MCF 10A (cell line): ENCODE measurements at regions of chr17 and their contacts with region 1.

Region 1: GRCh38 chr17:76940738-76941350 is 72.6 kb downstream of the MGAT5B start:
- DNase-seq: peak; percentile 6
- H3K4me3 Mint-ChIP-seq: no peak overlapping the region
- H3K27ac Mint-ChIP-seq: no peak overlapping the region
- H3K4me1 Mint-ChIP-seq: no peaks in the 10 kb centered on the region
- H3K27me3 Mint-ChIP-seq: no peaks in the 10 kb centered on the region
- CTCF ChIP-seq: no peak

Region 2: DNA sequence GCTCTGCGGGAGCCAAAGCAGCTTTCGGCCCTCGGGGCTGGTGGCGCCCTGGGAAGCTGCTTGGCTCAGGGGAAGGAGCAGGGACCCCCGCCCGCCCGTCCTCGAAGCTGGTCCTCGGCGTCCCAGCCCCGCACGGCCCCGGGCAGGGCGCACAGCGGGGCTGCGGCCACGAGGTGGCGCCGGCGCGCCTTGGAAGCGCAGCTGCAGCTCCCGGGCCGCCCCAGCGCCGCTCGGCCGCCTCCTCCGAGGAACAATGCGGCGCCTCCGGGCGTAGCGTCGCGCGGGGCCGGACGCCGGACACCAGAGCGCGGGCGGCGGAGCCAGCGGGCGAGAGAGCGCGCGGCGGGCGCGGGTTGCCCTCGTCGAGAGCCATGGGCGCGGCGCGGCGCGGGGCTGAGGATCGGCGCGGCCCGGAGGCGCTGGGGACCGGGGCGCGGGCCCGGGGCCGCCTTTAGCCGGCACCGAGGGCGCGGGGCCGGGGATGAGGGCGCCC is 72.6 kb before region 1 on chr17 and contains the start of gene MGAT5B:
- CTCF ChIA-PET with region 1: no interaction called
- POLR2A ChIA-PET with region 1: no interaction called
- intact Hi-C with region 1: loop called (anchors 10 kb)
- DNase-seq: peak; percentile 71
- H3K4me3 Mint-ChIP-seq: peak within 1 kb of the TSS; percentile 58
- H3K27ac Mint-ChIP-seq: no peak within 1 kb of the TSS
- H3K4me1 Mint-ChIP-seq: peaks cover 25% of the 10 kb centered on the region
- H3K27me3 Mint-ChIP-seq: no peaks in the 10 kb centered on the region
- CTCF ChIP-seq: peak; percentile 84
- total RNA-seq, gene MGAT5B: 1.3 and 1.7 TPM in 2 replicates

Region 3: GRCh38 chr17:76924345-76925342 is 16.2 kb before region 1 on chr17:
- CTCF ChIA-PET with region 1: no interaction called
- POLR2A ChIA-PET with region 1: no interaction called
- intact Hi-C with region 1: no loop called
- DNase-seq: no peak
- H3K4me3 Mint-ChIP-seq: no peak overlapping the region
- H3K27ac Mint-ChIP-seq: no peak overlapping the region
- H3K4me1 Mint-ChIP-seq: no peaks in the 10 kb centered on the region
- H3K27me3 Mint-ChIP-seq: peaks cover 13% of the 10 kb centered on the region
- CTCF ChIP-seq: no peak

Region 4: GRCh38 chr17:76997981-76998531 is 57.2 kb after region 1 on chr17:
- CTCF ChIA-PET with region 1: no interaction called
- POLR2A ChIA-PET with region 1: no interaction called
- intact Hi-C with region 1: no loop called
- DNase-seq: no peak
- H3K4me3 Mint-ChIP-seq: no peak overlapping the region
- H3K27ac Mint-ChIP-seq: no peak overlapping the region
- H3K4me1 Mint-ChIP-seq: peaks cover 7% of the 10 kb centered on the region
- H3K27me3 Mint-ChIP-seq: peaks cover 33% of the 10 kb centered on the region
- CTCF ChIP-seq: no peak

Region 5: GRCh38 chr17:77404812-77405581 is 464.2 kb after region 1 on chr17:
- CTCF ChIA-PET with region 1: no interaction called
- POLR2A ChIA-PET with region 1: no interaction called
- intact Hi-C with region 1: no loop called
- DNase-seq: peak; percentile 66
- H3K4me3 Mint-ChIP-seq: no peak overlapping the region
- H3K27ac Mint-ChIP-seq: peak overlapping the region; percentile 61
- H3K4me1 Mint-ChIP-seq: peaks cover 56% of the 10 kb centered on the region
- H3K27me3 Mint-ChIP-seq: no peaks in the 10 kb centered on the region
- CTCF ChIP-seq: no peak